Endothelial cell of umbilical vein (primary cell): ENCODE measurements at regions of chr1 and their contacts with region 1.

Region 1: GRCh38 chr1:93516180-93516579 is 68.3 kb downstream of the FNBP1L start:
- DNase-seq: no peak
- H3K4me3 ChIP-seq: no peak overlapping the region
- H3K27ac ChIP-seq: no peak overlapping the region
- H3K4me1 ChIP-seq: no peaks in the 10 kb centered on the region
- H3K27me3 ChIP-seq: no peaks in the 10 kb centered on the region
- CTCF ChIP-seq: no peak
- POLR2A ChIP-seq: no peak

Region 2: DNA sequence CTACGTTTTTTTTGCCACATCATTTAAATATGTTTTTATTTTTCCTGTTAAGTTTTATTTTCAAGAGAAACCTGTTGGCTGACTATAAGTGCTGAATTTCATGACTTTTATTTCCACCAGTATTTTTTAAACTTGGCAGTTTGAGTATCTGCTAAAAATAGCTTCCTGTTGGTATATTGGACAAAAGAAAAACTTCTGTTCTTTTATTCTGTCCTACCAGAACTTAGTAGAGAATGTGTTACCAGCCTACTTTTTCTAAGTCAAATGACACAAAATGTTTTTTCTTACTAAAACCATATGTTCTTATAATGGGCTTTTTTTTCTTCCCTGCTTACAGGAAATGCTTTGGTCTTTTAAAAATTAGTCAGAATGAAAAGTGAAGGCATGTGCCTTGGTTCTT is 162.9 kb before region 1 on chr1:
- CTCF ChIA-PET with region 1: no interaction called
- POLR2A ChIA-PET with region 1: no interaction called
- dilution Hi-C with region 1: no loop called
- intact Hi-C with region 1: no loop called
- DNase-seq: peak; percentile 8
- H3K4me3 ChIP-seq: no peak overlapping the region
- H3K27ac ChIP-seq: no peak overlapping the region
- H3K4me1 ChIP-seq: peaks cover 14% of the 10 kb centered on the region
- H3K27me3 ChIP-seq: no peaks in the 10 kb centered on the region
- CTCF ChIP-seq: no peak
- POLR2A ChIP-seq: no peak

Region 3: DNA sequence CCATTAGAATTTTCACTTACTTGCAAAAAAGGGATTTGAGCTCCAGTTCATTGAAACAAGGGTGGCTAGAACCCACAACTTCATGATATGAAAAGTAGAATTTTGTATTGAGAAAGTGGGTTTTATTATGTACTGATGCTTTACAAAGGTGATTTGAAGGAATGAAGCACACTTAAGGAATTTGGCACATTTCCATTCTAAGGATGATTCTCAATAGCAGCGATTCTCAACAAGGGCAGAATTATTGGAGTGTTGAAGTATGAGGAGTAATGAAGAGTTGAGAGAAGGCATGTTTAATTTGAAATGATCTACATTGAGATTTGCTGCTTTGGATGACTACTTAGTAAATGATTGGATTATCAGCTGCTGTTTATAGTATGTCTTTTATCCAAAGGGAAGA is 13.6 kb before region 1 on chr1:
- CTCF ChIA-PET with region 1: interaction called, 3 read pairs
- POLR2A ChIA-PET with region 1: no interaction called
- dilution Hi-C with region 1: no loop called
- intact Hi-C with region 1: loop called (anchors 1 kb)
- DNase-seq: no peak
- H3K4me3 ChIP-seq: no peak overlapping the region
- H3K27ac ChIP-seq: no peak overlapping the region
- H3K4me1 ChIP-seq: peaks cover 4% of the 10 kb centered on the region
- H3K27me3 ChIP-seq: no peaks in the 10 kb centered on the region
- CTCF ChIP-seq: no peak
- POLR2A ChIP-seq: no peak